ENCODE measurements at regions of chr11 and their contacts with region 1.

Region 1: GRCh38 chr11:67439321-67439883 is 1.9 kb upstream of the PTPRCAP start:
- DNase-seq: peak in 1 of 5 donors; percentile 34
- H3K4me3 ChIP-seq: peak overlapping the region; percentile 29 to 81
- H3K4me3 Mint-ChIP-seq: peak overlapping the region; percentile 96 to 99 (median 97)
- H3K27ac ChIP-seq: peak overlapping the region; percentile 78
- H3K27ac Mint-ChIP-seq: peak overlapping the region; percentile 92 to 98 (median 96)
- H3K4me1 ChIP-seq: peaks cover 69% of the 10 kb centered on the region
- H3K4me1 Mint-ChIP-seq: peaks cover 35 to 81% (median 53%) of the 10 kb centered on the region in 4 donors
- H3K27me3 ChIP-seq: no peaks in the 10 kb centered on the region
- H3K27me3 Mint-ChIP-seq: no peaks in the 10 kb centered on the region

Region 2: DNA sequence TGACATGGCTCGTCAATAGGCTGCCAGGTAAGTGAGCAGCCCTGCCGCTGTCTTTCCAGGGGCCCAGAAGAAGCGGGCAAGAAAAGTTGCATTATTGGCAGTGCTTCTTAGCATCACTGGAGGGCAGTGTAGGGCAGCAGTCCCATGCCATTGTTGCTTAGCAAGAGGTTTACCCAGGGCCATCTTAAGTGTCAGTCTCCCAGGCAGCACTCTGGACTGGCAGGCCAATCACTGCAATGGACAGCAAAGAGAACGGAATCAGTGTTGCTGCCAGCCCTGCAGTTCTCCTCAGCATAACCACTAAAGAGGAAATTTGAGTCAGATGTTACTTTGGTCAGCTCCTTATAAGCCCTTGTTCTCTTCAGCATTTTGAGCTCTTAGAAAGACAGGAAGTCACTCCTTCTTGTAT is 186.6 kb before region 1 on chr11:
- CTCF ChIA-PET with region 1: no interaction called
- POLR2A ChIA-PET with region 1: no interaction called
- intact Hi-C with region 1: no loop called
- DNase-seq: peak; percentile 26 to 46 (median 40)
- H3K4me3 ChIP-seq: no peak overlapping the region
- H3K4me3 Mint-ChIP-seq: peak overlapping the region in 3 of 8 donors; percentile 6 to 59 (median 39)
- H3K27ac ChIP-seq: no peak overlapping the region
- H3K27ac Mint-ChIP-seq: peak overlapping the region in 6 of 7 donors; percentile 7 to 78 (median 32)
- H3K4me1 ChIP-seq: peaks cover 15% of the 10 kb centered on the region
- H3K4me1 Mint-ChIP-seq: peaks cover 10 to 52% (median 32%) of the 10 kb centered on the region in 4 donors
- H3K27me3 ChIP-seq: no peaks in the 10 kb centered on the region
- H3K27me3 Mint-ChIP-seq: no peaks in the 10 kb centered on the region

Region 3: GRCh38 chr11:67420646-67421420 is 18.6 kb before region 1 on chr11:
- CTCF ChIA-PET with region 1: interaction called, 7 read pairs
- POLR2A ChIA-PET with region 1: interaction called, 704 read pairs
- intact Hi-C with region 1: loop called (anchors 1 kb)
- DNase-seq: peak; percentile 96 to 99 (median 97)
- H3K4me3 ChIP-seq: peak overlapping the region in 1 of 2 donors; percentile 69
- H3K4me3 Mint-ChIP-seq: peak overlapping the region; percentile 67 to 87 (median 80)
- H3K27ac ChIP-seq: peak overlapping the region; percentile 66
- H3K27ac Mint-ChIP-seq: peak overlapping the region; percentile 64 to 94 (median 92)
- H3K4me1 ChIP-seq: peaks cover 53% of the 10 kb centered on the region
- H3K4me1 Mint-ChIP-seq: peaks cover 29 to 63% (median 46%) of the 10 kb centered on the region in 4 donors
- H3K27me3 ChIP-seq: no peaks in the 10 kb centered on the region
- H3K27me3 Mint-ChIP-seq: no peaks in the 10 kb centered on the region

Region 4: DNA sequence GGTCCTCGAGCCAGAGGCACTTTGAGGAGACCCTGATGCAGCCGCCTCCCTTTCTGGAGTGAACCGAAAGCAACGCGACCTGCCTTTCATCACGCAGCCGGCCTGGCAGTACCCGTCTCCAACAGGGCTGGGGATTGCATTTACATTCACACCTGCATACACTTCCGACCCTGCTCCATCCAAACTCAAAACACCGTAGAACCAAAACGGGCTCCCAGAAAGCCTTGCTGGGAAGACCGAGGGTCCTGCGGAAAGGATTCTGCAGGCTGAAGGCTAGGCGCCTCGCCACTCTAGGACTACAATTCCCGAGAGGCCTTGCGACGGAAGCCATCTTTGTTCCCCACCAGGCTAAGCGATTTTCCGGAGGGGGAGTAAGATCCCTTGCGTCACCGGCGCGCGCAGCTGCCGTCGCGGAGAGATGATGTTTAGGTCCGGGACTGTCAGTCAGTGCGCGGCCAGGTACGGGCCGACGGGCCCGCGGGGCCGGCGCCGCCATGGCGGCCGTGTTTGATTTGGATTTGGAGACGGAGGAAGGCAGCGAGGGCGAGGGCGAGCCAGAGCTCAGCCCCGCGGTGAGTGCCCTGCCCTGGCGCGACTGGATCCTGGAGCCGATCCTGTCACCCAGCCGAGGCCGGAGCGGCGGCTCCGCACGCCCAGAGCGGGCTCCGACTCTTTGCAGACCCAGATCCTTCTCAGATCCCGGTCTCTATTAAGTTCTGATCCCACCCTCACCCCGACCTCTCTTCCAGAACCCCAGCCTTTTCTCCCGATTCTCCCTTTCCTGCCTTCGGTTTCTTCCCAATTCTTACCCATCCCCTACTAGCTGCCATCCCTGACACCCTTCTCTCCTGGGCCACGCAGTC is 11.1 kb before region 1 on chr11 and contains the start of gene RPS6KB2:
- CTCF ChIA-PET with region 1: interaction called, 14 read pairs
- POLR2A ChIA-PET with region 1: interaction called, 900 read pairs
- intact Hi-C with region 1: loop called (anchors 1 kb)
- DNase-seq: peak; percentile 97 to 99 (median 98)
- H3K4me3 ChIP-seq: peak within 1 kb of the TSS; percentile 94 to 95
- H3K4me3 Mint-ChIP-seq: peak within 1 kb of the TSS; percentile 93 to 100 (median 98)
- H3K27ac ChIP-seq: peak within 1 kb of the TSS; percentile 90
- H3K27ac Mint-ChIP-seq: peak within 1 kb of the TSS; percentile 95 to 99 (median 97)
- H3K4me1 ChIP-seq: peaks cover 49% of the 10 kb centered on the region
- H3K4me1 Mint-ChIP-seq: peaks cover 13 to 61% (median 31%) of the 10 kb centered on the region in 4 donors
- H3K27me3 ChIP-seq: no peaks in the 10 kb centered on the region
- H3K27me3 Mint-ChIP-seq: no peaks in the 10 kb centered on the region
- total RNA-seq, gene RPS6KB2: 78.1 to 79.9 TPM